ENCODE measurements at regions of chr7 and their contacts with region 1.

Region 1: DNA sequence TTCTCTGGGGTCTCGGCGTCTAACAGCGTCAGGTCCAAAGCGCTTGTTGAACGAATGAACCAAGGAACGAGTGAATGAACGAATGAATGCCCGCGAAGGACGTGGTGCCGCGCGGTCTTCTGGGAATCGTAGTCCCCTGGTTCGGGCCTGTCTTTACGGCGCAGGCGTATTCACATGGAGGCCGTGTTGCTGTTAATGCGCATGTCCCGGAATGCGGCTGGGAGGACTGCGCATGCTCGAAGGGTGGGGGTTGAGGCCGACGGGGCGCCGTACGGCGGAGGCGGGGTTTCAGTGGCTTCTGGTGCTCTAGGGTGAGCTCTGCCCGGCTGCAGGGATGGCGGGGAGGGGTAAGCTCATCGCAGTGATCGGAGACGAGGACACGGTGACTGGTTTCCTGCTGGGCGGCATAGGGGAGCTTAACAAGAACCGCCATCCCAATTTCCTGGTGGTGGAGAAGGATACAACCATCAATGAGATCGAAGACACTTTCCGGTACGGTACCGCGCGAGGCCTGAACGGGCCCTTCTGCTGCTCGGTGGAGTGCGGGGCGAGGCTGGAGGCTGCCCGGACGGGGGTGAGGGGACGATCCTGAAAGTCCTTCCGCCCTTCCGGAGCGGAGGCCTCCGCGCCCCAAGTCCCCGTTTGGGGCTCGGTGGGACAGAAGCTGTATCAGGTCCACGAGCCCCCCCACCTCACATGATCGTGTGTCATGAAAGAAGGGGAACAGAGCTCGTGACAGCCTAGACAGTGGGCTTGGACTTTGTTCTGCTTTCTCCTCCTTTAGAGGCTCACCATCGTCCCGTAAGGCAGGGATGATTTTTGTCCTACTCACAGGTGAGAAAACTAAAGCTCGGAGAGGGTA is at the start of gene ATP6V1F:
- DNase-seq: peak; percentile 99
- ATAC-seq: peak; percentile 98
- total RNA-seq, gene ATP6V1F: 89.6 TPM

Region 2: GRCh38 chr7:128740996-128741395 is 121.8 kb before region 1 on chr7:
- intact Hi-C with region 1: loop called (anchors 10 kb)
- DNase-seq: no peak
- ATAC-seq: no peak

Region 3: GRCh38 chr7:129401967-129402860 is 539.4 kb after region 1 on chr7:
- intact Hi-C with region 1: no loop called
- DNase-seq: no peak
- ATAC-seq: no peak